Activated CD8-positive, alpha-beta T cell treated with anti-CD3 and anti-CD28 coated beads for 36 hours (primary cell): ENCODE measurements at regions of chr19 and their contacts with region 1.

Region 1: GRCh38 chr19:37466798-37467607 is at the start of gene ZNF569:
- DNase-seq: peak; percentile 94
- ATAC-seq: peak; percentile 73
- H3K4me3 Mint-ChIP-seq: peak within 1 kb of the TSS; percentile 85
- H3K27ac Mint-ChIP-seq: peak within 1 kb of the TSS; percentile 92
- H3K4me1 Mint-ChIP-seq: peaks cover 22% of the 10 kb centered on the region
- H3K27me3 Mint-ChIP-seq: no peaks in the 10 kb centered on the region
- CTCF ChIP-seq: no peak
- total RNA-seq, gene ZNF569: 7.5 to 11.3 TPM

Region 2: DNA sequence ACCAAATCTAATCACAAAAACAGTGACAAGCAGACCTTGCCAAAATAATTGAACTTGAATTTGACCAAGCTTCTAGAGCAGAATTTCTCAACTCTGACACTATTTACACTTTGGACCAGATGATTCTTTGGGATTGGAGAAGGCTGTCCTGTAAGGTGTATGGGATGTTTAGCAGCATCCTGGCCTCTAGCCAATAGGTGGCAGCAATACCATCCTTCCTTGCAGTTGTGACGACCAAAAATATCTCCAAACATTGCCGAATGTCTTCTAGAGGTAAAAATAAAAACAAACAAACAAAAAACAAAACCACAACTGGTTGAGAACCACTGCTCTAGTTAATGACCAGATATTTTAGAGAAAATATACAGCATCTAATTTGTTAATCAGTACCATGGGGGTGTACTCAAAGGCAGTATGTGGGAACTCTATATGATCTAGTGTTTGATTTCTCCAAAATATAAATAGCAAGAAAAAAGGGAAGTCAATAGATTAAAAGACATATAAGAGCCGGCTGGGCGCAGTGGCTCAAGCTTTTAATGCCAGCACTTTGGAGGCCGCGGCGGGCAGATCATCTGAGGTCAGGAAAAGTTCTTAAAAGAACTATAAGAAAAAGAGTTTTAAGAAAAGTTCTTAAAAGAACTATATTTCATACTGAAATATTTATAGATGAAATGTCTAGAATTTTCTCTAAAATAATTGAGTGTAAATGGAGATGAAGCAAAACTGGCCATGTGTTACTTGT is 157.0 kb before region 1 on chr19:
- CTCF ChIA-PET with region 1: no interaction called
- POLR2A ChIA-PET with region 1: no interaction called
- intact Hi-C with region 1: loop called (anchors 10 kb)
- DNase-seq: peak; percentile 41
- ATAC-seq: no peak
- H3K4me3 Mint-ChIP-seq: no peak overlapping the region
- H3K27ac Mint-ChIP-seq: no peak overlapping the region
- H3K4me1 Mint-ChIP-seq: peaks cover 11% of the 10 kb centered on the region
- H3K27me3 Mint-ChIP-seq: peaks cover 3% of the 10 kb centered on the region
- CTCF ChIP-seq: peak; percentile 60

Region 3: GRCh38 chr19:37370880-37371661 is 95.9 kb before region 1 on chr19 and contains the start of gene ZNF527:
- CTCF ChIA-PET with region 1: interaction called, 3 read pairs
- POLR2A ChIA-PET with region 1: interaction called, 11 read pairs
- intact Hi-C with region 1: no loop called
- DNase-seq: peak; percentile 98
- ATAC-seq: peak; percentile 98
- H3K4me3 Mint-ChIP-seq: peak within 1 kb of the TSS; percentile 98
- H3K27ac Mint-ChIP-seq: peak within 1 kb of the TSS; percentile 96
- H3K4me1 Mint-ChIP-seq: peaks cover 15% of the 10 kb centered on the region
- H3K27me3 Mint-ChIP-seq: no peaks in the 10 kb centered on the region
- CTCF ChIP-seq: no peak
- total RNA-seq, gene ZNF527: 5.2 to 5.5 TPM

Region 4: GRCh38 chr19:37519890-37520289 is 52.9 kb after region 1 on chr19:
- CTCF ChIA-PET with region 1: no interaction called
- POLR2A ChIA-PET with region 1: no interaction called
- intact Hi-C with region 1: no loop called
- DNase-seq: no peak
- ATAC-seq: peak; percentile 39
- H3K4me3 Mint-ChIP-seq: no peak overlapping the region
- H3K27ac Mint-ChIP-seq: no peak overlapping the region
- H3K4me1 Mint-ChIP-seq: no peaks in the 10 kb centered on the region
- H3K27me3 Mint-ChIP-seq: no peaks in the 10 kb centered on the region
- CTCF ChIP-seq: no peak

Region 5: DNA sequence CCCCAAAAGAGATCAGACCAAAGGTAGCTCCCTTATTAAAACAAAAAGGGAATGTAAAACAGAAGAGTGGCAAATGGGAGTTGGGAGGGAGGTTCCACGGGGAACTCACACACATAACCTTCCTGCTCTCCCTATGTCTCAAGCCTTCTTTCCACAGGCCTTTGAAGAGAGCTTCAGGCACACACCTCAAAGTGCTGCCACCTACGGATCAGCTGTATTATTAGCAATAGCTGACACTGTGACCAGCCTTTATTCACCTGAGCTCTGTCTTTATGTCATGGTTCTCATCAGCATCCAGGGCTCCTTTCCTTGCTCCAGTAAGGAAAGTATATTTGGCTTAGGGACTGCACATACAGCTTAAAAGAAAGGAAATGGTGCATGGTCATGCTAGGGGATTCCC is 116.3 kb after region 1 on chr19:
- CTCF ChIA-PET with region 1: no interaction called
- POLR2A ChIA-PET with region 1: no interaction called
- intact Hi-C with region 1: no loop called
- DNase-seq: no peak
- ATAC-seq: no peak
- H3K4me3 Mint-ChIP-seq: no peak overlapping the region
- H3K27ac Mint-ChIP-seq: no peak overlapping the region
- H3K4me1 Mint-ChIP-seq: no peaks in the 10 kb centered on the region
- H3K27me3 Mint-ChIP-seq: no peaks in the 10 kb centered on the region
- CTCF ChIP-seq: no peak

Region 6: GRCh38 chr19:37779127-37780005 is 312.4 kb after region 1 on chr19 and contains the start of gene ZNF573:
- CTCF ChIA-PET with region 1: no interaction called
- POLR2A ChIA-PET with region 1: no interaction called
- intact Hi-C with region 1: loop called (anchors 10 kb)
- DNase-seq: peak; percentile 92
- ATAC-seq: peak; percentile 90
- H3K4me3 Mint-ChIP-seq: peak within 1 kb of the TSS; percentile 98
- H3K27ac Mint-ChIP-seq: peak within 1 kb of the TSS; percentile 99
- H3K4me1 Mint-ChIP-seq: peaks cover 40% of the 10 kb centered on the region
- H3K27me3 Mint-ChIP-seq: no peaks in the 10 kb centered on the region
- CTCF ChIP-seq: no peak
- total RNA-seq, gene ZNF573: 8.3 to 8.7 TPM